Colonic mucosa (tissue), 4 donors: ENCODE measurements at regions of chr7 and their contacts with region 1.

Region 1: GRCh38 chr7:127066974-127067373 is 185.8 kb downstream of the GRM8 start:
- DNase-seq: no peak
- H3K4me3 ChIP-seq: no peak overlapping the region
- H3K27ac ChIP-seq: no peak overlapping the region
- H3K4me1 ChIP-seq: no peaks in the 10 kb centered on the region
- H3K27me3 ChIP-seq: no peaks in the 10 kb centered on the region
- CTCF ChIP-seq: no peak

Region 2: GRCh38 chr7:126760914-126761577 is 305.9 kb before region 1 on chr7:
- intact Hi-C with region 1: no loop called
- DNase-seq: no peak
- H3K4me3 ChIP-seq: no peak overlapping the region
- H3K27ac ChIP-seq: no peak overlapping the region
- H3K4me1 ChIP-seq: no peaks in the 10 kb centered on the region
- H3K27me3 ChIP-seq: no peaks in the 10 kb centered on the region
- CTCF ChIP-seq: no peak

Region 3: DNA sequence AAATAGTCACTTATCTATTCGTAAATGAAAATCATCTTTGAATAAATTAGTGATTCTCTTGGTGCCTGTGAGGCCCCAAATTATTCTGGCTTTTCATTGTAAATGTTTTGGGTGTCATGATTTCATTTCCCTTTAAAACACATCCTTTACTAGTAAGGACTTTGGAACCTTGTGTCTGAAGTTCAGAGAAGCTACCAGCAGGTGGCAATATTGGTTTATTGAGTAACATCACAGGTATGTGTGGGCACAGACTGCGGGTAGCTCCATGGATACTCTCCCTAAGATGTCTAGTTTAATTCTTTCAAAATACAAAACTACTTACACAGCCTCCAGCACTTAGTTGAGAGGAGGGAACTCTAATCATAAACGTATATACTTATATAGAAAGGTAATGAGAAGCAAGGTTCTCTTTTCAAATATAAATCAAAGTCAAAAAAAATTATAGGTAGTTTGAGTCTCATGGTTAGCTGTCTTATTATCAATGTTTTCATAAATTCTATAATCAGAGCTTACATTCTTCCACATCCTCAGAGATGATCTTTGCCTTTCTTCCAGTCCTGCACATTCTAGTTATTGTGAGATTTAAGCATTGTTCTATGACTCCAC is 263.8 kb before region 1 on chr7:
- intact Hi-C with region 1: loop called (anchors 5 kb)
- DNase-seq: peak; percentile 63
- H3K4me3 ChIP-seq: no peak overlapping the region
- H3K27ac ChIP-seq: no peak overlapping the region
- H3K4me1 ChIP-seq: no peaks in the 10 kb centered on the region
- H3K27me3 ChIP-seq: no peaks in the 10 kb centered on the region
- CTCF ChIP-seq: peak; percentile 60

Region 4: DNA sequence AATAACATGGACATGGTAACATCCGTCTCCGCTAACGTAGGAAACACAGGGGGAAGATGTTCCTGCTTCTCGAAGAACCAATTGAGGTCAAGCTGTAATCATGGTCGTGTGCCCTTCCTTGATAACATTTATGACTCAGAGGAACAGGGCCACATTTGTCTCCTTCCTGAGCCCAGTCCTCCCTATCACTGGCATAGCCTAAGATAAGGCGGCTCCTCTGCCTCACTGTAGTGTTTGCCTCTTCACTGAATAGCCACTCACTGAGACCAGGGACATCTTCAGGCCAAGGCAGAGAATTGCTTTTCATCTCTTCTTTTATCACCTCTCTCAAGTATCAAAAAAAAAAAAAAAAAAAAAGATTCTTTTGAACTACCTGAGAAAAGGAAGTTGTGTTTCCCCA is 191.1 kb after region 1 on chr7:
- intact Hi-C with region 1: no loop called
- DNase-seq: no peak
- H3K4me3 ChIP-seq: no peak overlapping the region
- H3K27ac ChIP-seq: no peak overlapping the region
- H3K4me1 ChIP-seq: no peaks in the 10 kb centered on the region
- H3K27me3 ChIP-seq: no peaks in the 10 kb centered on the region
- CTCF ChIP-seq: no peak